CD8-positive, alpha-beta T cell (primary cell): ENCODE measurements at regions of chr15 and their contacts with region 1.

Region 1: DNA sequence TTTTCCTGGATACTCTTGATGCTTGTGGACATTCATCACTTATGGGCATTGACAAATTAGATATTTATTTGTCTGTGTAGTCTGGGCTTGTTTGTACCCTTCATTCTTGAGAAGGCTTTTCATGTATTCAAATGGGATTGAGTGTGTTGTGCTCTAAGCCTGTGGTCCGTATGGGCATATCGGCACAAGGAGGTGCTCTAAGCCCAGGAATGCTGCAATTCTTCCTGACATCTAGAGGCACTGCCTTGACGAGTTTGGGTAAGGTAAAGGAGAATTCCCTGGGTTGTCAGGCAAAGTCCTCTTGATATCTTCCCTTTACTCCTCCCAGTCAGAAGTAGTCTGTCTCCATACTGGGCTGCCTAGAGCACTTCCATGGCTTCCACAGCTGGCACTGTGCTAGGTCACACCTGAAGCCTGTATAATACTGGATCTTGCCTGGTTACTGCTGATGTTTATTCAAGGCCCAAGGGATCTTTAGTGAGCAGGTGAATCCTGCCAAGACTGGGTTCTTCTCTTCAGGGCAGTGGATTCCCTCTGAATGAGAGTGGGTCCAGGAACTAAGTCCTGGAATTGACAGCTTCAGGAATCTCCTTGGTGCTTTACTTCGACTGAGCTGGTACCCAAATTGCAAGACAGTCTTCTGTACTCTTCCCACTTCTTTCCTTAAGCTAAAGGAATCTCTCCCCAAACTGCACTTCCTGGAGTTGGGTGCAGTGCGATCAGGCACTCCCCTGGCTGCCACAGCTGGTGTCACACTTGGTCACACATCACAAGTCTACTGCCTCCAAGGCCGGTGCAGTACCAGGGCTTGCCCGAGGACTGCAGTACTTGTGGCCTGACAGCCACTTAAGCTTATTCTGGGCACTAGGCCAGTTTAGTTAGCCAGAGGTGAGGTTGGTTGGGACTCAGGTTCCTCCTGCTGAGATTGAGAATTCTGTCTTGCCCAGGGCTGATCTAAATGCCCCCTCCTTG is 46.0 kb downstream of the GALK2 start:
- DNase-seq: peak in 2 of 9 experiments; percentile 16 to 17
- ATAC-seq: no peak
- H3K4me3 ChIP-seq: no peak overlapping the region
- H3K4me3 Mint-ChIP-seq: no peak overlapping the region
- H3K27ac ChIP-seq: no peak overlapping the region
- H3K27ac Mint-ChIP-seq: no peak overlapping the region
- H3K4me1 ChIP-seq: no peaks in the 10 kb centered on the region
- H3K4me1 Mint-ChIP-seq: peaks cover 17% of the 10 kb centered on the region
- H3K27me3 ChIP-seq: no peaks in the 10 kb centered on the region
- H3K27me3 Mint-ChIP-seq: no peaks in the 10 kb centered on the region
- CTCF ChIP-seq: no peak

Region 2: DNA sequence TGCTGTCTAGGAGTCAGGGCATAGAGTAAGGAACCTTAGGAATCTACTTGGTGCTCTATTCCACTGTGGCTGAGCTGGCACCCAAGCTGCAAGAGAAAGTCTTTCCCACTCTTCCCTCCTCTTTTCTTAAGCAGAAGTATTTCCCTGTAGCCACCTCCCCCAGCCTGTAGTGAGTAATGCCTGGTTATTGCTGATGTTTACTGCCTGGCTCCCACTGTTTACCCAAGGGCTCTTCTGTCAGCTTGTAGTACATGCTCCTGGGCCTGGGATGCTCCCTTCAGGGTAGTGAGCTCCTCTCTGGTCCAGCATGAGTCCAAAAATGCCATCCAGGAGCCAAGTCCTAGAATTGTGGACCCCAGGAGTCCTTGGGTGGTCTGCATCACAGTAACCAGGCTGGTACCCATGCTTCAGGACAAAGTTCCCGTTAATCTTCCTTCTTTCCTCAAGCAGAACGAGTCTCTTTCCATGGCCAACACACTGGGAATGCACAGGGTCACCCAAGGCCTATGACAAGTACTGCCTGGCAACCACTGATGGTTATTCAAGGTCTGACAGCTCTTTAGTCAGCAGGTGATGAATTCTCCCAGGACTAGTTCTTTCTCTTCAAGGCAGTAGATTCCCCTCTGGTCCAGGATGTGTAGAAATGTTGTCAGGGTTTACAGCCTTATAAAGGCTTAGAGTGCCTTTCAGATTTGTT is 28.4 kb before region 1 on chr15:
- CTCF ChIA-PET with region 1: no interaction called
- POLR2A ChIA-PET with region 1: no interaction called
- intact Hi-C with region 1: loop called in 1 of 2 experiments (anchors 2 kb)
- DNase-seq: no peak
- ATAC-seq: no peak
- H3K4me3 ChIP-seq: no peak overlapping the region
- H3K4me3 Mint-ChIP-seq: no peak overlapping the region
- H3K27ac ChIP-seq: no peak overlapping the region
- H3K27ac Mint-ChIP-seq: no peak overlapping the region
- H3K4me1 ChIP-seq: no peaks in the 10 kb centered on the region
- H3K4me1 Mint-ChIP-seq: peaks cover 44% of the 10 kb centered on the region
- H3K27me3 ChIP-seq: no peaks in the 10 kb centered on the region
- H3K27me3 Mint-ChIP-seq: no peaks in the 10 kb centered on the region
- CTCF ChIP-seq: no peak